ENCODE measurements at regions of chr17 and their contacts with region 1.

Region 1: GRCh38 chr17:17633310-17633709 is 41.8 kb upstream of the PEMT start:
- DNase-seq: no peak
- H3K4me3 ChIP-seq: no peak overlapping the region
- H3K27ac ChIP-seq: no peak overlapping the region
- H3K4me1 ChIP-seq: no peaks in the 10 kb centered on the region; a peak in 1 of 4 replicates
- H3K27me3 ChIP-seq: no peaks in the 10 kb centered on the region
- CTCF ChIP-seq: no peak
- EP300 ChIP-seq: no peak
- RAD21 ChIP-seq: no peak

Region 2: GRCh38 chr17:17603178-17603894 is 30.0 kb before region 1 on chr17:
- CTCF ChIA-PET with region 1: no interaction called
- POLR2A ChIA-PET with region 1: no interaction called
- DNase-seq: no peak
- H3K4me3 ChIP-seq: no peak overlapping the region
- H3K27ac ChIP-seq: no peak overlapping the region
- H3K4me1 ChIP-seq: no peaks in the 10 kb centered on the region; a peak in 1 of 4 replicates
- H3K27me3 ChIP-seq: no peaks in the 10 kb centered on the region
- CTCF ChIP-seq: no peak
- EP300 ChIP-seq: no peak
- RAD21 ChIP-seq: no peak

Region 3: DNA sequence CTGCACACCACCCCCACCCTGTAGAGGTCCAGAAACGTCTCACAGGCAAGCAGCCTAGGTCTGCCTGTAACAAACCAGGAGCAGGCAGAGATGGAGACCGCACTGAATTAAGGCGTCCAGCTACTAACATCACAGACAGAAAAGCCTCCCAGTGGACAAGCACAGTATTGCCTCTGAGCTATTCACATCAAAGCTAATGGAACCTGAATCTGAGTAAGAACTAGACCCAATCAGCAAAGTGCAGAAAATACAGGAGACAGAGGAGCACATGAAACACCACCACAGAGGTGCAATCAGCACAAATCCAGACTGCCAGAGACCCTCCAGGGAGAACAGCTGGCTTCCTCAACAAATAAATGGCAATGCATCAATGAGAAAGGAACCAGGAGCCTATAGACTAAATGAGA is 19.6 kb before region 1 on chr17:
- CTCF ChIA-PET with region 1: interaction called, 12 read pairs
- POLR2A ChIA-PET with region 1: no interaction called
- DNase-seq: peak; percentile 70
- H3K4me3 ChIP-seq: no peak overlapping the region
- H3K27ac ChIP-seq: no peak overlapping the region
- H3K4me1 ChIP-seq: no peaks in the 10 kb centered on the region
- H3K27me3 ChIP-seq: no peaks in the 10 kb centered on the region
- CTCF ChIP-seq: peak; percentile 68
- EP300 ChIP-seq: no peak
- RAD21 ChIP-seq: peak; percentile 71

Measured in SK-N-SH (cell line).